ENCODE measurements at regions of chr10 and their contacts with region 1.

Region 1: GRCh38 chr10:111648046-111648445 is 535.5 kb downstream of the GPAM start:
- DNase-seq: no peak
- ATAC-seq: no peak
- H3K4me3 ChIP-seq: no peak overlapping the region
- H3K27ac ChIP-seq: no peak overlapping the region
- H3K4me1 ChIP-seq: no peaks in the 10 kb centered on the region
- H3K27me3 ChIP-seq: no peaks in the 10 kb centered on the region
- CTCF ChIP-seq: no peak
- POLR2A ChIP-seq: no peak
- RAD21 ChIP-seq: no peak

Region 2: DNA sequence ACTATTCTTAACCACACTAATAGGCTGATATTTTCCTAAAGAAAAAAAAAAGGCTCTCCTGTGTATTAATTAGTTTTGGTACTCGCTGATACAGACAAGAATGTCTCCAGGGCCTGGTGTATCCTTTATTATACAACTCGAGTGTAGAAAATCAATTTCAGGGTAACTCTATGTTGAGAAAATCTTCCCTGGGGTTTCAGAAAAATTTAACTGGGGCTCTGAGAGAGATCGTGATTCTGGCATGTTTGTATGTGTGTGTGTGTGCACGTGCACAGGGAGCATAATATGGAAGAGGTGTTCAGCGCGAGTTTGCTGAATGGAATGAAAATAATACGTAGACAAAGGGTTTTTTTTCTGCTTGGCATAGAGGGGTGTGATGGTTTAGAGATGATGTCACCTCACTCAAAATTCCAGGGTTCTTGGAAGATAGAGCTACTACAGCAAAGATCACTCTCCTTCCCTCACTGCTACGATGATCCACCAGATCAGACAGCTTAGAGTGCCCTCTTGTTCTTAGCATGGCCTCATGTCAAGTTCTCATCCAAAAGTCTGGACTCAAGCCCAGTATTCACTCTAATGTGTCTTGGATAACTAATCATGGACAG is 38.9 kb after region 1 on chr10:
- CTCF ChIA-PET with region 1: no interaction called
- POLR2A ChIA-PET with region 1: no interaction called
- RAD21 ChIA-PET with region 1: no interaction called
- intact Hi-C with region 1: loop called (anchors 1 kb)
- DNase-seq: no peak
- ATAC-seq: no peak
- H3K4me3 ChIP-seq: no peak overlapping the region
- H3K27ac ChIP-seq: no peak overlapping the region
- H3K4me1 ChIP-seq: no peaks in the 10 kb centered on the region
- H3K27me3 ChIP-seq: no peaks in the 10 kb centered on the region; the same call in 1 of the 2 replicates
- CTCF ChIP-seq: no peak
- POLR2A ChIP-seq: no peak
- RAD21 ChIP-seq: no peak

Measured in HCT116 (cell line).